Mammary epithelial cell (primary cell): ENCODE measurements at regions of chr16 and their contacts with region 1.

Region 1: DNA sequence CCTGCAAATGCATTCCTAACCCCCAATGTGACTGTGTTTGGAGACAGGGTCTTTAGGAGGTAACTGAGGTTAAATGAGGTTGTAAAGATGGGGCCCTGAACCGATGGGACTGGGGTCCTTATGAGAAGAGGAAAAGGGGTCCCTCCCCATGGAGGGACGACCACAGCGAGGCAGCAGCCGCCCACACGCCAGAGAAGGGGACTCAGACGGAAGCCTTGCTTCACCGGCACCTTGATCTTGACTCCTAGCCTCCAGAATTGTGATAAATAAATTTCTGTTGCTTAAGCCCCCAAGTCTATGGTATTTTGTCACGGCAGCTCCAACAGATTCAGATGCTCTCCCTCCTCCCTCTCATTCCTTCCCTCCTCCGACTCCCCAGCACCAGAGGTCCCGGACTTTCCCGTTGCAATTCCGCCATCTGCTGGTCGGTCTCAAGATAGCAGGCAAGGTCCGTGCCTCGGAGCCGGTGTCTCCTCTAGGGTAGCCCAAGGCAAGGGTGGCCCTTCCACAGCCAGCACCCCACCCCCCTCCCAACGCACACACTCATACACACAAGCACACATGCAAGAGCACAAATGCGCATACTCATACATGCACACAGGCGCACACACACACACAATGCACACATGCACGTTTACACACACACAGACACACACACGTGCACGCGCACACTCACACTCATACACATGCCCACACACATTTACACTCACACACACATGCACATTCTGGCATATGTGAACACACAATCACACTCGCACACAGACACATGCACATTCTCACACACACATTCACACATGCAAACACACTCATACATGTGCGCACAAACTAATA is 23.1 kb upstream of the C16orf78 start:
- DNase-seq: peak; percentile 39
- H3K4me3 ChIP-seq: no peak overlapping the region
- H3K27ac ChIP-seq: no peak overlapping the region
- H3K4me1 ChIP-seq: no peaks in the 10 kb centered on the region
- H3K27me3 ChIP-seq: no peaks in the 10 kb centered on the region
- CTCF ChIP-seq: peak; percentile 69 to 83

Region 2: GRCh38 chr16:48687421-48688038 is 663.0 kb before region 1 on chr16:
- CTCF ChIA-PET with region 1: interaction called, 6 read pairs
- dilution Hi-C with region 1: no loop called
- in situ Hi-C with region 1: loop called (anchors 10 to 25 kb)
- intact Hi-C with region 1: loop called (anchors 1 kb)
- DNase-seq: peak; percentile 60
- H3K4me3 ChIP-seq: no peak overlapping the region
- H3K27ac ChIP-seq: no peak overlapping the region
- H3K4me1 ChIP-seq: no peaks in the 10 kb centered on the region
- H3K27me3 ChIP-seq: no peaks in the 10 kb centered on the region
- CTCF ChIP-seq: peak; percentile 81 to 87

Region 3: GRCh38 chr16:48901712-48902374 is 448.6 kb before region 1 on chr16:
- CTCF ChIA-PET with region 1: no interaction called
- dilution Hi-C with region 1: no loop called
- in situ Hi-C with region 1: no loop called
- intact Hi-C with region 1: loop called (anchors 2 kb)
- DNase-seq: no peak
- H3K4me3 ChIP-seq: no peak overlapping the region
- H3K27ac ChIP-seq: no peak overlapping the region
- H3K4me1 ChIP-seq: no peaks in the 10 kb centered on the region
- H3K27me3 ChIP-seq: peaks cover 1% of the 10 kb centered on the region
- CTCF ChIP-seq: no peak

Region 4: DNA sequence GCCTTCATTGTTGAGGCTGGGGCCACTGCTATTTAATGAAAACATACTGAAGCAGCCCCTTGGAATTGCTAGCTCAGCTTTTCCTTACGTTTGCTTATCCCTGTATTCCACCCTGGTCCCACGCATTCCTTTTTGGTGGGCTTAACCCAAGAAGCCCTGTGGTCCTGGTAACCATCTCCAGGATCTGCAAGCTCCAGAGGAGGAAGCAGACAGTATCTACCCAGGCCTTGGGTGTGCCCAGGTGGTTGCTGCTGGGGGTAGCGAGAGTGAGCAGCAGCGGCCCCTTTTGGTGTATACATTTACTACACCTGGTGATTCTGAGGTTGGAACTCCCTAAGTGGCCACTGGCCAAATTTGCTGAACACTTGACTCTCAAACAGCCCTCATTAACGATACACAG is 166.6 kb before region 1 on chr16:
- CTCF ChIA-PET with region 1: no interaction called
- dilution Hi-C with region 1: no loop called
- in situ Hi-C with region 1: no loop called
- intact Hi-C with region 1: loop called (anchors 1 kb)
- DNase-seq: peak; percentile 25
- H3K4me3 ChIP-seq: no peak overlapping the region
- H3K27ac ChIP-seq: no peak overlapping the region
- H3K4me1 ChIP-seq: no peaks in the 10 kb centered on the region
- H3K27me3 ChIP-seq: peaks cover 2% of the 10 kb centered on the region
- CTCF ChIP-seq: peak; percentile 56 to 79